ENCODE measurements at regions of chr5 and their contacts with region 1.

Region 1: DNA sequence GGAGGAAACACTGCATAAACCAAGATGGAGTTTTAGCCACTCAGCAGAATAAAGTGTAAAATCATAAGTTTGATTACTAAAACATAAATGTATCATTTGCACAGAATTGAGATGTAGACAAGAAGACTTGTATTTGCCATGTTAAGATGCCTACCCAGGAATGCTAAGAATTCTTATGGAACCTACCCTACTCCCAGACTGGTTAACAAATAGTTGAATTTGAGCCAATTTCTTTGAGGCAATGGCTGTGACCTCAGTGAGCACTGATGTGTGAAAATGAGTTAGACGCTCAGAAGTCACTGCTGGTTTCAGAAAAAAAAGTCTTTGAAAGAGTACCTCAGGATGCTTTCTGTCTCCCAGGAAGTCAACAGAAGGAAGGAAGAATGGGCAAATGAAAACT is 95.6 kb downstream of the ESM1 start:
- DNase-seq: no peak
- H3K4me3 Mint-ChIP-seq: no peak overlapping the region
- H3K27ac Mint-ChIP-seq: no peak overlapping the region
- H3K4me1 Mint-ChIP-seq: no peaks in the 10 kb centered on the region
- H3K27me3 Mint-ChIP-seq: peaks cover 82% of the 10 kb centered on the region

Region 2: DNA sequence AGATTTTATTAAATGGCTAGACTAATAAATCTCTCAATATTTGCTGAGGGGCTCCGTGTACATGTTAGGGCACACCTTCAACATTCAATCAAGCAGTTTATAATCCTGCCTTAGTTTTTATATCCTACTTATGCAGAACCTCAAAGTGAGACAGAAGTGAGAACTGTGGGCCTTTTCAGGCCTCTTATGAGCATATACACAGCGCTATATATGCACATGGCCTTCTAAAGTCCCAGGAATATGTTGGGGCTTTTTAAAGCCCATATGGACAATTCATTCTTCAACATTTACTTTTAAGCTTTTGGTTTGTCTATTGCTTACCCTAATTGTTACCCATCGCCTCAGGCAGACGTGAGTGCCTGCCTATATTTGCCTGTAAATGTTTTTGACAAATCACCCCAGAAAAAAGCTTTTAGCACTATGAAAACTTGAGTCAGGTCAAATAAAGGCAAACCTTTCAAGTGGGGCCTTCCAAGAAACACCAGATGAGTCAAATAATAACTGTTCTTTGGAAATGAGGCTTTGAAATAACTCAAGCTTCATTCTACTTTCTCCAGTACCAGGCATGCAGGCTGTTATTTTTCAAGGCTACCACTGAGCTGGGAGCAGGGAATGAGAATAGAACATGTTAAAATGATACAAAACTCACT is 37.4 kb after region 1 on chr5:
- intact Hi-C with region 1: no loop called
- DNase-seq: no peak
- H3K4me3 Mint-ChIP-seq: no peak overlapping the region
- H3K27ac Mint-ChIP-seq: peak overlapping the region; percentile 3
- H3K4me1 Mint-ChIP-seq: peaks cover 8% of the 10 kb centered on the region
- H3K27me3 Mint-ChIP-seq: peaks cover 14% of the 10 kb centered on the region

Region 3: DNA sequence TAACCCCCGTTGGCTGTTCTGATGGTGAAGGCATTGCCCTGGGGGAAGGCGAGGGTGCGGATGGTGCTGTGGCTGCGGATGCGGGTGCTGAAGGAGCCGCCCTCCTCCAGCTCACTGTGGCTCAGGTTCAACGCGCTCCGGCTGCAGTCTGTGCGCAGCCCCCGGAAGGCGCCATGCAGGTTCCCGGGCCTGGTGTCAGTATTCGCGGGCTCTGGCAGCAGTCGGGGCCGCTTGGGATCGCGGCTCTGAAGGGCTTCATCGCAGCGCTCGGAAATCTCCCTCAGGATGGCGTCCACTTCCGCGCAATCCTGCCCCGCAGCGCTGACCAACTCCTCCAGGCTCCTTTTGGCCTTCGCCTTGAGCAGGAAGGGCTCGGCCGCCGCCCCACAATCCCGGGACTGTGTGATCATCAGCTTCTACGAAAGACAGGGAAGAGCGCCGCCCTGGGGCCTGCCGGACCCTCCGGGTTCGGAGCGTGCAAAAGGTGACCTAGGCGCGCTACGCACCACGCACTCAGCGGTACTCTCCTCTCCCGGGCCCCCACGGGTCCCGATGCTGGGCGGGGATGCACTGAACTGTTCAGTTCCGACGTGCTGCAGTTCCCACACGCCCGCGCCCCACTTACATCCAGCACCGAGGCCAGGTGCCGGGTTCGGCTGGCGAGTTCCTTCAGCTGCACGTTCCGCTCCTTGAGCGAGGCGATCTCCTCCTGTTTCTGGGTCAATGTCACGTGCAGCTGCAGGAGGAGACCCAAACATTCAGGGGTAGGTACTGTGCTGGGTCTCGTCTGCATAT is 330.8 kb after region 1 on chr5:
- intact Hi-C with region 1: loop called (anchors 5 kb)
- DNase-seq: no peak
- H3K4me3 Mint-ChIP-seq: peak overlapping the region; percentile 62
- H3K27ac Mint-ChIP-seq: peak overlapping the region; percentile 23
- H3K4me1 Mint-ChIP-seq: peaks cover 39% of the 10 kb centered on the region
- H3K27me3 Mint-ChIP-seq: peaks cover 80% of the 10 kb centered on the region

Measured in activated T-helper 1 cell treated with anti-CD3 and anti-CD28 coated beads, Interleukin-12 subunit alpha, Interleukin-12 subunit beta, Interleukin-2, Interleukin-4 antibody, amounts not matched to agents 30 ng/mL and 10 ng/mL and 1 ng/mL, durations not matched to agents 14 hours and 24 hours and 36 hours (primary cell).